Panc1 (cell line): ENCODE measurements at regions of chr1 and their contacts with region 1.

Region 1: DNA sequence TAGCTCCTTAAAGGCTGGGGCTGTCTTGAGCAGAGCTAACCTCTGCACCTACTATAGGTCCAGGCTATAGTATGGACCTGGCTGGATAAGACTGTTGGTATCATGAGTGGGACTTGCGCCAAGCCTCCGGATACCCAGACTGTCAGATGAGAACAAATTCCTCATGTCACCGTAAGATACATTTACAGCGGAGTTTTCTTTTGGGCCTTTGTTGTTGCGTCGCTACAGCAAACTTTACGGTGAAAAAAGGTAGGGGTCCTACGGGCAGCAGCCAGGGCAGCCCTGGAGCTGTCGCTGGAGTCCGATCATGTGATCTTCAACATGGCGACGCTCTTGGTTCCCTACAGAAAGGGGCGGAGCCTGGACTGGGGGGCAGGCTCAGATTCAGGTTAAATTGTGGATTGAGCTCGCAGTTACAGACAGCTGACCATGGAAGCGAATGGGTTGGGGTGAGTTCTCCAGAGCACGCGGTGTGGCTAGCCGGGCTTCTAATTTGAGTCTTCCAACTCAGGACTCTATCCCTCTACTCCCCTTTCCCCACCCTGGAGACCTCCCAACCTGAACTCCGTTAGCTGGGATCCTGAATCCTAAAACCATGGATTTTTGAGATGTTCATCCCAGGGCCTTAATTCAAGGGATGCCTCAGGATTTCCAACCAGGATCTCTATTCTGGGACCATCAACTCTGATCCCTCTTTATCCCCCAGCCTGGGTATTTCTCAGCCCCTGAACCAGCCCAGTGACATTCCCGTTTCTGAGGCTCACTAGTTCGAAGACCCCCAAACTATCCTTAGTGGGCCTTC is at the start of gene UROD:
- DNase-seq: peak; percentile 94
- ATAC-seq: peak; percentile 84
- H3K4me3 ChIP-seq: peak within 1 kb of the TSS; percentile 89 to 94
- H3K27ac ChIP-seq: peak within 1 kb of the TSS; percentile 80
- H3K4me1 ChIP-seq: peaks cover 17% of the 10 kb centered on the region
- H3K27me3 ChIP-seq: no peaks in the 10 kb centered on the region
- CTCF ChIP-seq: no peak
- total RNA-seq, gene UROD: 76.8 TPM

Region 2: GRCh38 chr1:44721485-44722361 is 290.3 kb before region 1 on chr1:
- CTCF ChIA-PET with region 1: interaction called, 12 read pairs
- POLR2A ChIA-PET with region 1: no interaction called
- in situ Hi-C with region 1: no loop called
- intact Hi-C with region 1: no loop called
- DNase-seq: peak; percentile 98
- ATAC-seq: peak; percentile 98
- H3K4me3 ChIP-seq: no peak overlapping the region
- H3K27ac ChIP-seq: peak overlapping the region; percentile 97
- H3K4me1 ChIP-seq: peaks cover 7% of the 10 kb centered on the region
- H3K27me3 ChIP-seq: no peaks in the 10 kb centered on the region
- CTCF ChIP-seq: no peak

Region 3: GRCh38 chr1:44862829-44863401 is 149.1 kb before region 1 on chr1:
- CTCF ChIA-PET with region 1: interaction called, 10 read pairs
- POLR2A ChIA-PET with region 1: no interaction called
- in situ Hi-C with region 1: no loop called
- intact Hi-C with region 1: no loop called
- DNase-seq: no peak
- ATAC-seq: no peak
- H3K4me3 ChIP-seq: no peak overlapping the region
- H3K27ac ChIP-seq: no peak overlapping the region
- H3K4me1 ChIP-seq: no peaks in the 10 kb centered on the region
- H3K27me3 ChIP-seq: no peaks in the 10 kb centered on the region
- CTCF ChIP-seq: no peak

Region 4: DNA sequence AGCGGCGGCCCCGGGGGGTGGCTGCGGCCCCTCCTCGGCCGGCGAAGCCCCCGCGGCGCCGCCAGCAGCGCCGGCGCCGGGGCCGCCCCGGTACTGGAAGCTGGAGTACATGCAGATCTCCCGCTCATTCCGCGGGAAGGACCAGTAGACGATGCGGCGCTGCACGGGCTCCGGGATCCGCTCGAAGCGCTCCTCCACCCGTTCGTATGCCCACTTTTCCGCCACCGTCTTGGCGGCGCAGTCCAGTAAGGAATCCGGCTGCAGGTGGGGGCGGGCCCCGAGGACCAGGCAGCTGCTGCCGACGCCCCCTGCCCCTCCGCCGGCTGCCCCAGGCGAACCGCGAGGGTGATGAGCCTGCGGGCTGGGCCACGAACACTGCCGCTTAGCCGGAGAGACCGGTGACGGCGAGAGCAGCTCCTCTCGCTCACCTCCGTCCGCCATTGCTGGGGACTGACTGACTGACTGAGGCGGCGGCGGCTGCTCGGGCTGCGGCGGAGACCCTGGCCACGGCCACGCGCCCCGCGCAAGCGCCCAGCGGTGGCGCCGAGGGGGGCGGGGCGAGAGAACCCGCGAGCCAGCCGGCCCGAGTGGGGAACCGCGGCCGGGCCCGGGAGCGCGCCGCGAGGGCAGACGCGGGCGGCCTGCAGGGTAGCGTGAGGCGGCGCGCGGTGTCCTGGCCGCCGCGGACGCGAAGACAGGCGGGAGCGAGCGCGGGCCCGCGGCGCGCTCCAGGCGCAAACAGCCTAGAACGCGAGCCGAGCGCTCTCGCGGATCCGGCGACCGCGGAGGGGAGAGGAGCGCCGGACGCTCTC is 194.1 kb after region 1 on chr1 and contains the start of gene ZSWIM5:
- CTCF ChIA-PET with region 1: no interaction called
- POLR2A ChIA-PET with region 1: no interaction called
- in situ Hi-C with region 1: no loop called
- intact Hi-C with region 1: loop called (anchors 10 kb)
- DNase-seq: no peak
- ATAC-seq: peak; percentile 95
- H3K4me3 ChIP-seq: peak within 1 kb of the TSS; percentile 82 to 88
- H3K27ac ChIP-seq: peak within 1 kb of the TSS; percentile 79
- H3K4me1 ChIP-seq: peaks cover 23% of the 10 kb centered on the region
- H3K27me3 ChIP-seq: no peaks in the 10 kb centered on the region
- CTCF ChIP-seq: no peak
- total RNA-seq, gene ZSWIM5: 7.9 TPM

Region 5: GRCh38 chr1:45423906-45424678 is 412.1 kb after region 1 on chr1:
- CTCF ChIA-PET with region 1: no interaction called
- POLR2A ChIA-PET with region 1: no interaction called
- in situ Hi-C with region 1: no loop called
- intact Hi-C with region 1: no loop called
- DNase-seq: no peak
- ATAC-seq: no peak
- H3K4me3 ChIP-seq: no peak overlapping the region
- H3K27ac ChIP-seq: no peak overlapping the region
- H3K4me1 ChIP-seq: no peaks in the 10 kb centered on the region
- H3K27me3 ChIP-seq: no peaks in the 10 kb centered on the region
- CTCF ChIP-seq: no peak

Region 6: DNA sequence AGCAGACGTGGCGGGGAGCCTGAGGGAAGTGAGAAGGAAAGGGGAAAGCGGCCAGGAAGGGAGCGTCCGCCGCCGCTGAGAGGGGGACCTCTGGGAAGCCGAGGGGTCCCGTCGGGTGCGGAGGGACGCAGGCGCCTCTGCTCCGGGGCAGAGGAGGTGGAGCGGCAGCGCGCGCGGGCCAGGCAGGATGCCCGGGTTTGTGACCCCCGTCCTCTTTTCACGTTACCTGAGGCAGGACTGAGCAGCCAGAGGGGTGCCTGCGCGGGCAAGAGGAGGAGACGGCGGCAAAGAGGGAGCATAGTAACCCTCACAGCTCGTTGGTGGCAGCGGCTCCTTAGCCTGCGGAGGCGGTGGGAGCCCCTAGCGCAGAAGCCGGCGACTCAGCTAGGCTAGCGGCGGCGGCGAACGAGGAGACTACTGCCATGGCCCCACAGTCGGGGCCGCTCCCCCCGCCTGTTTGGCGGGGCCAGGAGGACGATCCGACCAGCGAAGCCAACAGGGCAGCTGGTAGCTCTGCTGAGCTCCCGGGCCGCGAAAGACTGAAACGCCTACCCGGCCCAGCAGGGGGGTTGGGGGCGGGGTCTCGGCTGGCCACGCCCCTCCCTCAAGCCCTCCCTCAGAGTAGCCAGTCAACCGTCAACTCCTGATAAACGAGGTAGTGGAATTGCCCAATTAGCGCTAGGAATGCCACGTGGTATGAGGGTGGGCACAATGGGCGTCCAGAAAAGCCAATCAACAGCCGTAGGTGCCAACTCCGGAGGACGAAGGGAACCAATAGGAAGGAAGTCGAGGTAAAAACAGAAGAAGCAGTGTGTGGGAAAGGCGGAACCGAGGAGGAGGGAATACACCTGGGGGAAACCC is 478.8 kb after region 1 on chr1 and contains the start of gene TESK2:
- CTCF ChIA-PET with region 1: interaction called, 3 read pairs
- POLR2A ChIA-PET with region 1: interaction called, 9 read pairs
- in situ Hi-C with region 1: no loop called
- intact Hi-C with region 1: loop called (anchors 5 kb)
- DNase-seq: peak; percentile 97
- ATAC-seq: peak; percentile 95
- H3K4me3 ChIP-seq: peak within 1 kb of the TSS; percentile 63 to 77
- H3K27ac ChIP-seq: peak within 1 kb of the TSS; percentile 29
- H3K4me1 ChIP-seq: 0 out of 2 replicates have a peak, but pooled peaks cover 3% of the 10 kb centered on the region
- H3K27me3 ChIP-seq: no peaks in the 10 kb centered on the region; the same call in 1 of the 2 replicates
- CTCF ChIP-seq: no peak
- total RNA-seq, gene TESK2: 3.3 TPM